Activated naive CD4-positive, alpha-beta T cell treated with anti-CD3 and anti-CD28 coated beads for 36 hours (primary cell): ENCODE measurements at regions of chr2 and their contacts with region 1.

Region 1: DNA sequence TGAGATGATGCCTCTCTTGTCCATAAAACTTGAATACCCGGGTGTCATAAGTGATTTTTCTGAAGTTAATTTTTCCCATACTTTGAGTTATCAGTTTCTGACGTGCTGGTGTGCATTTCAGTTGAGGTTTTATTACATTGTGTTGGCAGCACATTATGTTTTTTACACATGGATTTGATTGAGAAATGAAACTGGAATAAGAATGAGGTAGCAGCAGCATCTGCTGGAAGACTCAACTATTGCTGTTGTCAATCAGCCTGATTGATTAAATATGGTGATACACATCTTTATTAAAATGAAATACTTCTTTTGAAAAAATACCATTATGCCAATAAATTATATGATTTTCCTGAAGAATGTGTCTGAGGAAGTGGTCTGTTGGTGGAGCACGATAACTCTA is 60.5 kb downstream of the INSIG2 start:
- DNase-seq: no peak
- H3K4me3 Mint-ChIP-seq: no peak overlapping the region
- H3K27ac Mint-ChIP-seq: no peak overlapping the region
- H3K4me1 Mint-ChIP-seq: peaks cover 9% of the 10 kb centered on the region
- H3K27me3 Mint-ChIP-seq: peaks cover 13% of the 10 kb centered on the region

Region 2: GRCh38 chr2:117917223-117917917 is 231.4 kb before region 1 on chr2:
- CTCF ChIA-PET with region 1: no interaction called
- intact Hi-C with region 1: no loop called
- DNase-seq: no peak
- H3K4me3 Mint-ChIP-seq: no peak overlapping the region
- H3K27ac Mint-ChIP-seq: no peak overlapping the region
- H3K4me1 Mint-ChIP-seq: no peaks in the 10 kb centered on the region
- H3K27me3 Mint-ChIP-seq: no peaks in the 10 kb centered on the region

Region 3: GRCh38 chr2:118103951-118104940 is 44.6 kb before region 1 on chr2:
- CTCF ChIA-PET with region 1: no interaction called
- intact Hi-C with region 1: loop called (anchors 5 kb)
- DNase-seq: no peak
- H3K4me3 Mint-ChIP-seq: no peak overlapping the region
- H3K27ac Mint-ChIP-seq: no peak overlapping the region
- H3K4me1 Mint-ChIP-seq: peaks cover 11% of the 10 kb centered on the region
- H3K27me3 Mint-ChIP-seq: no peaks in the 10 kb centered on the region

Region 4: DNA sequence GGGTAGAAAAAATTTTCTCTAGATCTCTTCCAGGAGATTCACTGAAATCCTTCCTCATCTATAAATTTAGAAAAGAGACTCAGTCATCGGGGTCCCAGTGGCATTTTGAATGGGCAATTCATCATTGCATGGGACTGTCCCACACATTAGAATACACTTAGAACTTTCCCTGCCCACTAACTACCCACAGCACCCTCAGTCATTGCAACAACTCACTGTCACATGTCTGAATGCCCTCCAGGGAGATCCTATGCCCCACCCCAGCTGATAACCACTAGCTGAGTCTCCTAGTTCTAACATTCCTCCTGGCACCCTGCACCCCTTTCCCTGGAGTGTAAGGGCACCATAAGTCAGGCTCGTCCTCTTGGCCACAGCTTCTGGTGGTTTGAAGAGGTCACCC is 29.1 kb after region 1 on chr2:
- CTCF ChIA-PET with region 1: no interaction called
- intact Hi-C with region 1: loop called (anchors 2 kb)
- DNase-seq: peak; percentile 46
- H3K4me3 Mint-ChIP-seq: no peak overlapping the region
- H3K27ac Mint-ChIP-seq: peak overlapping the region; percentile 86
- H3K4me1 Mint-ChIP-seq: peaks cover 23% of the 10 kb centered on the region
- H3K27me3 Mint-ChIP-seq: peaks cover 4% of the 10 kb centered on the region